ENCODE measurements at regions of chr1 and their contacts with region 1.

Region 1: DNA sequence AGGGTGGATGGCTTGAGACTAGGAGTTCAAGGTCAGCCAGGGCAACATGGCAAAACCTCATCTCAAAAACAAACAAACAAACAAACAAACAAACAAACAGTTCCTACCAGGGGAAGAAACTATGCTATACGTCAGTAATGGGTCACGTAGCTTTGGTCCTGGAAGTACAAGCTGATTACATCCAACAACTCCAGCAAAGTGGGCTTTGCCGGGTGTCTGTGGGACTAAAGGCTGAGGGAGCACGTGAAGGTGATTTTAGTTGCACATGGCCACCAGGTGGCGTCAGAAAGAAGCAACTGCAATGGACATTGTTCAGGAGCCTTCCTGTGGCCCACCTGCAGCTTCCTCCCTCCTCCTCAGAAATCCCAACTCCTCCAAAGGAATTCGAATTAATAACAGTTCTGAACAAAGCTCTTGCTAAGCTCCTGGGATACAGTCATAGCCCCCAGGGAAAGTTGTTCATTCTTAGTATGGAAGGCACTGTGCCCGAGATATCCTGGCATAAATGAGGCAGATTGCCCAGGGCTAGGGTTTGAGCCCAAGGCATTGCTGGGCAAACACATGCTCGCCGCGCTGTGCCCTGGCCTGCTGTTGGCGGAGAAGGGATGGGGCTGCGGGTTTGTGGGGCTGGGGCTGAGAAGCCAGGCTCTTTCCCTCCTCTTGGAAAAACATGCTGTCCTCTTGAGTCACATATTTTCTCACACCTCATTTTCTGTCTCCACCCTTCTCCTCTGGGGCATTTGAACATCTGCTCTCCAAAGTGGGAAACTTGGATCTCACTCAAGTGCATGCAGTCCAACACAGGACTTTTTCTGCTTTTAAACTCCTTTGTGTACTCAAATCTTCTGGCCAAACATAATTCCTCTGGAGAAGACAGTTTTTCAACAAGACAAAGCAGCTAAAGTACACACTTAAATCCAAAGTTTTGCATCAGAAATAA is 28.6 kb downstream of the AKNAD1 start:
- DNase-seq: peak; percentile 85
- ATAC-seq: peak; percentile 74
- H3K4me3 Mint-ChIP-seq: no peak overlapping the region
- H3K27ac Mint-ChIP-seq: no peak overlapping the region
- H3K4me1 Mint-ChIP-seq: no peaks in the 10 kb centered on the region
- H3K27me3 Mint-ChIP-seq: no peaks in the 10 kb centered on the region

Region 2: DNA sequence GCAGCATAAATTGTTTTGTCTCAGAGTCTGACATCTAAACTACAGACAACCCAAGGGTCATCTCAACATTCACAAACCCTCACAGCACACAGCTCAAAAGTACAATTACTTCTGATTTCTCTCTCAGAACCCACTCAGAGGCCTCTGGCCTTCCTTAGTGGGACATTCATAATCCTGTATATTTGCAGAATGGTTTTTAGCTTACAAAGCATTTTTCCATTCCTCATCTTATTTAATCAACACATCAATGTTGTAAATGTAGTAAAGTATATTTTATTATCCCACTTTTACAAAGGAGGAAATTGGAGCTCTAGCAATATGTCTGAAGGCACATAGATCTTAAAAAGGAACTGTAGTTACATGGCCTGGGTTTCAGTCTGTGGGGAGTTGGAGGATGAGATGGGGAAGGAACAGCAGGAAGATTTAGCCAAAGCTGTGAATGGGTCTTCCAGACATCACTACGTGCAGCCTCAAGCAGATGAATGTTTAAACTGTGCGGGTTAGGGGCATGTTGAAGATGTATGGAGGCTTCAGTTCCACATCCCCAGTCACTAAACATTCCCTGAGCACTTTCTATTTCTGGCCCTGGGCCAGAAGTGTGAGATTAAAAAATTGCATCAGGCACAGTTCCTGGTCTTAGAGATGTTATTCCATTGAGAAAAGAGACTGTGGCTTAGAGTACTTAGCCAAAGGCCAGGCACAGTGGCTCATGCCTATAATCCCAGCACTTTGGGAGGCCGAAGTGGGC is 15.3 kb after region 1 on chr1:
- CTCF ChIA-PET with region 1: interaction called, 19 read pairs
- POLR2A ChIA-PET with region 1: no interaction called
- intact Hi-C with region 1: no loop called
- DNase-seq: no peak
- ATAC-seq: no peak
- H3K4me3 Mint-ChIP-seq: no peak overlapping the region
- H3K27ac Mint-ChIP-seq: no peak overlapping the region
- H3K4me1 Mint-ChIP-seq: no peaks in the 10 kb centered on the region
- H3K27me3 Mint-ChIP-seq: no peaks in the 10 kb centered on the region

Region 3: GRCh38 chr1:108858240-108858950 is 30.1 kb after region 1 on chr1:
- CTCF ChIA-PET with region 1: interaction called, 14 read pairs
- POLR2A ChIA-PET with region 1: interaction called, 4 read pairs
- intact Hi-C with region 1: no loop called
- DNase-seq: no peak
- ATAC-seq: no peak
- H3K4me3 Mint-ChIP-seq: no peak overlapping the region
- H3K27ac Mint-ChIP-seq: no peak overlapping the region
- H3K4me1 Mint-ChIP-seq: peaks cover 3% of the 10 kb centered on the region
- H3K27me3 Mint-ChIP-seq: peaks cover 10% of the 10 kb centered on the region

Region 4: DNA sequence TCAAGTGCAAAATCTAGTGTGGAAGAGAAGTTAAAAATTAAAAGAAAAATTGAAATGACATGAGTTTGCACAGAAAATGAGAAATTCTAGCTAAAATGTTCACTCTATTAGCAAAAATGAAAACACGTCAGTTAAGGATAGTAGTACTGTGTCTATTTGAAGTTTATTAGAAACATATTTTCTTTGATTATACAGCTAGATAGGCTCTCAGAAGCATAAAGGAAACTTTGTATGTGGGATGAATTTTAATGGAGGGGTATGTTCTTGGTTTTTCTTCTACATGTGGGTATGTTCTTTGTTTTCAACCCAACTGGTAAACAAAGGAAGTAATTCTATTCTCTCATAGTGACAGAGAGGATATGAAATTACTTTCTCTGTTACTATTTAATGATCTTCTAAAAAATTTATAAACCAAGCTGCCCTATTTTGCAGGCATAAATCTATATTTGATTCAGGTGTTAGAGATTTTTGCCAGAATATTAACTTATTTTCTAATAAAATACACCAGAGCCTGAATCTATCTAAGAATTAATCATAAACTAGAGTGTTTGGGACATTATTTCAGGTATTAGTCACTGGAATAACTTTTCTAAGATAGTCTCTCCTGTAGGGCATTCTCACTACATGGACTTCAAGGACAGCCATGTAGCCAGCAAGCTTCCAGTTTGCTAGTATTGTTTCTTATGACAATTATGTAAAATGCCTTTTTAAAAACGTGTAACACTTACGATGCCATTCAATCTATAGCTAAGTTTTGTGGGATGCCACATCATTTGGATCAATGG is 64.3 kb after region 1 on chr1:
- CTCF ChIA-PET with region 1: interaction called, 205 read pairs
- POLR2A ChIA-PET with region 1: no interaction called
- intact Hi-C with region 1: no loop called
- DNase-seq: no peak
- ATAC-seq: no peak
- H3K4me3 Mint-ChIP-seq: no peak overlapping the region
- H3K27ac Mint-ChIP-seq: no peak overlapping the region
- H3K4me1 Mint-ChIP-seq: no peaks in the 10 kb centered on the region
- H3K27me3 Mint-ChIP-seq: peaks cover 2% of the 10 kb centered on the region

Region 5: GRCh38 chr1:108897865-108898720 is 69.8 kb after region 1 on chr1:
- CTCF ChIA-PET with region 1: interaction called, 205 read pairs
- POLR2A ChIA-PET with region 1: no interaction called
- intact Hi-C with region 1: loop called (anchors 1 kb)
- DNase-seq: peak; percentile 24
- ATAC-seq: peak; percentile 70
- H3K4me3 Mint-ChIP-seq: no peak overlapping the region
- H3K27ac Mint-ChIP-seq: no peak overlapping the region
- H3K4me1 Mint-ChIP-seq: no peaks in the 10 kb centered on the region
- H3K27me3 Mint-ChIP-seq: no peaks in the 10 kb centered on the region

Region 6: GRCh38 chr1:109193653-109194590 is 365.6 kb after region 1 on chr1:
- CTCF ChIA-PET with region 1: interaction called, 3 read pairs
- POLR2A ChIA-PET with region 1: no interaction called
- intact Hi-C with region 1: loop called in 1 of 2 experiments (anchors 5 kb)
- DNase-seq: peak; percentile 80
- ATAC-seq: peak; percentile 62
- H3K4me3 Mint-ChIP-seq: no peak overlapping the region
- H3K27ac Mint-ChIP-seq: no peak overlapping the region
- H3K4me1 Mint-ChIP-seq: peaks cover 8% of the 10 kb centered on the region
- H3K27me3 Mint-ChIP-seq: no peaks in the 10 kb centered on the region